Mammary epithelial cell (primary cell): ENCODE measurements at regions of chr2 and their contacts with region 1.

Region 1: DNA sequence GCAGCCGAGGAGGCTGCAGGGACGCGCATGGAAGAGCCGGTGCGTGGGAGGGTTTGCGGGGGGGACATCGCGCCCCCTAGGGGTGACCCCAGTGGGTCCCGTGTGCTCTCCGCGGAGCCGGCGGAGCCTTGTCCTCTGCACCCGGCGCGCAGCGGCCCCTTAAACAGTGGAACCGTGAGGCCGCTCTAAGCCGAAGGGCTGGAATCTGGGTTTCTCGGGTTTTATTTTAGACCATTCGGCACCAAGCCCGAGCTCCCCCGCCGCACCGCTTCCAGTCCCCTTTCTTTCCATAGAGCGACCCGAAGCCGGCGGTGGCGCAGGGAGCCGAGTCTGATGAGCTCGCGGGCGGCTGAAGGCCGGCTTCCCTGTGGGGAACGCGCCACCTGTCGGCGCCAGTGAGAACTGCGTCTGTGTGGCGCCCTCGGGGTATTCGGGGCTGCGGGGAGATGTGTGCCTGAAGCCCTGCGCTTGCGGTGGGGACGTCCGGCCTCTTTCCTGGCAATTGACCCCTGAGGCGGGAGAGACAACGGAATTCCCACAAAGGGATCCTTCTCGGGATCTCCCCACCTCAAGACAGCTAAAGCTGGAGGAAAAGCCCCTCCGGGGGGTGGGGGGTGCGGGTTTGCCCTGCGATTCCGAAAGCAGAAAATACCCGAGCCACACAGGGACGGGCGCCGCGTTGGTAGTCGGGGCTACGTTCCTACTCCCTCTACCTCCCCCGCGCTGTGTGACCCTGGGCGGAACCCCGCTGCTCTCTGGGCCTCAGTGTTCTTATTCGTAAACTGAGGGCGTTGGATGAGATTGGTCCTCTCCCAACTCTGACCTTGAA is 8.2 kb upstream of the EN1 start:
- DNase-seq: peak; percentile 59
- H3K4me3 ChIP-seq: peak overlapping the region in 2 of 3 experiments; percentile 25 to 32
- H3K27ac ChIP-seq: no peak overlapping the region
- H3K4me1 ChIP-seq: peaks cover 8% of the 10 kb centered on the region
- H3K27me3 ChIP-seq: peaks cover 83% of the 10 kb centered on the region
- CTCF ChIP-seq: peak; percentile 76 to 92

Region 2: DNA sequence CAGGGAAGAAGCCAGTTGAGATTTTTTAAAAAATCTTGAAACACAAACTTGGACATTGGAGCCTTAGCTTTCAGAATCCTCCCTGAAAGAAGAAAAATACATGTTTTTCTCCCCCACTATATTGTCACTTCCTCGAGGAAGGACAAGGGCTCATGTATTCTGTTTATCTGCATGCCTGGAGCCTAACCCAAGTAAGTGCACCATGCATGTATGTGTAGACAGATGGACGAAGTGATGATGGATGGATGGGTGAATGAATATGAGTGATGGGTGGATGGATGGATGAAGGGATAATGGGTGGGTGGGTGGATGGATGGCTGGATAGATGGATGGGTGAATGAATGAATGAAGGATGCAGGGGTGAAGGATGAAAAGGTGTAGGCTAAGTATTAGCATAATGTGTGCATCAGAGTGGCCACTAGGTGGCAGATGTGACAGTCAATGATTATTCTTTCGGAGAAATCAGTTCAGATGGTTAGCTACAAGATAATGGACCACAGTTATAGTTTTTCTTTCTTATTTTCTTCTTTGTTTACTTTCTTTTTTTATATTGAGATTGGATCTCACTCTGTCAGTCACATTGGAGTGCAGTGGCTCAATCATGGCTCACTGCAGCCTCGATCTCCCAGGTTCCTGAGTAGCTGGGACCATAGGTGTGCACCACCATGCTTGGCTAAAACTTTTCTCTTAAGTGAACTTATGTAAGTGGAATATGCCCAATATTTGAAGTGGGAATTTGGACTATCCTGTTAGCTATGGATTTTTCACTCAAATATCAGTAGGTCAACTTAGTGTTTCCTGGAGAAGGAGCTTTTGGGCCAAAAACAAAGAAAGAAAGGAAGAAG is 823.3 kb before region 1 on chr2:
- CTCF ChIA-PET with region 1: no interaction called
- dilution Hi-C with region 1: loop called (anchors 25 kb)
- in situ Hi-C with region 1: loop called (anchors 10 to 25 kb)
- intact Hi-C with region 1: no loop called
- DNase-seq: peak; percentile 23
- H3K4me3 ChIP-seq: no peak overlapping the region
- H3K27ac ChIP-seq: no peak overlapping the region
- H3K4me1 ChIP-seq: no peaks in the 10 kb centered on the region
- H3K27me3 ChIP-seq: peaks cover 2% of the 10 kb centered on the region
- CTCF ChIP-seq: peak; percentile 68 to 74

Region 3: GRCh38 chr2:118371515-118371914 is 484.1 kb before region 1 on chr2:
- CTCF ChIA-PET with region 1: interaction called, 4 read pairs
- dilution Hi-C with region 1: no loop called
- in situ Hi-C with region 1: loop called (anchors 10 kb)
- intact Hi-C with region 1: loop called (anchors 1 kb)
- DNase-seq: peak; percentile 32
- H3K4me3 ChIP-seq: no peak overlapping the region
- H3K27ac ChIP-seq: no peak overlapping the region
- H3K4me1 ChIP-seq: no peaks in the 10 kb centered on the region
- H3K27me3 ChIP-seq: no peaks in the 10 kb centered on the region
- CTCF ChIP-seq: peak; percentile 96 to 98

Region 4: GRCh38 chr2:118539290-118539689 is 316.4 kb before region 1 on chr2:
- CTCF ChIA-PET with region 1: no interaction called
- dilution Hi-C with region 1: no loop called
- in situ Hi-C with region 1: loop called in 1 of 2 experiments (anchors 10 kb)
- intact Hi-C with region 1: loop called (anchors 1 kb)
- DNase-seq: no peak
- H3K4me3 ChIP-seq: no peak overlapping the region
- H3K27ac ChIP-seq: no peak overlapping the region
- H3K4me1 ChIP-seq: no peaks in the 10 kb centered on the region
- H3K27me3 ChIP-seq: peaks cover under 1% of the 10 kb centered on the region
- CTCF ChIP-seq: peak; percentile 33 to 63

Region 5: DNA sequence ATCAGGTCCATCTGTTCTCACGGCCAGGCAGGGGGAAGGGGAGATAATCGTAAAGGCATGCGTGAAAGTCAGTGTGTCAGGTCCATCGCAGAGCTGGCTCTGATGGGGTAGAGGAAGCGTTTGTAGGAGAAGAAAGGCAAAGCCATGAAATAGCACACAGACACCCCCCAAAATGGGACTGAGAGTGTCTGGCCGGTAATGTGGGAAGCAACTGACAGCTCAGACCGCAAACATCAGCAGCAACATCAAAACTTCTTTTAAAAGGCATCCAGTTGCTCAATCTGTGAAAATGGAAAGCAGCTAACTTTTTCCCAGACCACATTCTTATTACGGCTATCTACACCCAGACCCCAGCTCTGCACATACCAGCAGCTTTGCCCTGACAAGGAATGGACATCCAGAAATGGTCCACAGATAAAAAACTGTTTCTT is 240.8 kb before region 1 on chr2:
- CTCF ChIA-PET with region 1: no interaction called
- dilution Hi-C with region 1: no loop called
- in situ Hi-C with region 1: no loop called
- intact Hi-C with region 1: no loop called
- DNase-seq: no peak
- H3K4me3 ChIP-seq: no peak overlapping the region
- H3K27ac ChIP-seq: no peak overlapping the region
- H3K4me1 ChIP-seq: no peaks in the 10 kb centered on the region
- H3K27me3 ChIP-seq: peaks cover 2% of the 10 kb centered on the region
- CTCF ChIP-seq: no peak

Region 6: GRCh38 chr2:118658596-118659198 is 197.0 kb before region 1 on chr2:
- CTCF ChIA-PET with region 1: no interaction called
- dilution Hi-C with region 1: no loop called
- in situ Hi-C with region 1: no loop called
- intact Hi-C with region 1: no loop called
- DNase-seq: peak; percentile 9
- H3K4me3 ChIP-seq: no peak overlapping the region
- H3K27ac ChIP-seq: no peak overlapping the region
- H3K4me1 ChIP-seq: no peaks in the 10 kb centered on the region
- H3K27me3 ChIP-seq: no peaks in the 10 kb centered on the region
- CTCF ChIP-seq: no peak

Region 7: GRCh38 chr2:118668431-118669424 is 186.9 kb before region 1 on chr2:
- CTCF ChIA-PET with region 1: no interaction called
- dilution Hi-C with region 1: no loop called
- in situ Hi-C with region 1: no loop called
- intact Hi-C with region 1: loop called (anchors 5 kb)
- DNase-seq: peak; percentile 81
- H3K4me3 ChIP-seq: no peak overlapping the region
- H3K27ac ChIP-seq: peak overlapping the region; percentile 70
- H3K4me1 ChIP-seq: peaks cover 22% of the 10 kb centered on the region
- H3K27me3 ChIP-seq: no peaks in the 10 kb centered on the region
- CTCF ChIP-seq: no peak

Region 8: GRCh38 chr2:118774458-118775133 is 81.1 kb before region 1 on chr2:
- CTCF ChIA-PET with region 1: no interaction called
- dilution Hi-C with region 1: loop called (anchors 5 kb)
- in situ Hi-C with region 1: no loop called
- intact Hi-C with region 1: no loop called
- DNase-seq: peak; percentile 59
- H3K4me3 ChIP-seq: peak overlapping the region; percentile 53 to 83 (median 72)
- H3K27ac ChIP-seq: no peak overlapping the region
- H3K4me1 ChIP-seq: peaks cover 7% of the 10 kb centered on the region
- H3K27me3 ChIP-seq: no peaks in the 10 kb centered on the region
- CTCF ChIP-seq: no peak